Caco-2 (cell line): ENCODE measurements at regions of chr11 and their contacts with region 1.

Region 1: DNA sequence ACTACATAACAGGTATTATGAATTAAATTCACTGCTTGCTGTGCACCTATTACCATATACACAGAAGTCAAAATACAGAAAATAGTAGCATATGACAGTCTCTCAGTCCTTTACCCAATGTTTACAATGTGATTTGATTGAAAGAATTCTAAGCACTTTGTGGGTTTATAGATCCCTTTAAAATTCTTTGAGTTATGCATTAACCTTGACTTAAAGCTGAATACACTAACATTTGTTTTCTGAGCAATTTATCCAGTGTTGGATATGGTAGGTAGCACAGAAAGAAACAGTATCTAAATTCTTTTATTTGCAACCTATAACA is 230.8 kb upstream of the DDI1 start:
- DNase-seq: peak in 1 of 2 experiments; percentile 33
- H3K4me3 ChIP-seq: no peak overlapping the region
- H3K4me3 Mint-ChIP-seq: peak overlapping the region; percentile 39
- H3K27ac Mint-ChIP-seq: peak overlapping the region; percentile 68
- H3K4me1 ChIP-seq: peaks cover 49% of the 10 kb centered on the region
- H3K4me1 Mint-ChIP-seq: peaks cover 20% of the 10 kb centered on the region
- H3K27me3 ChIP-seq: no peaks in the 10 kb centered on the region
- H3K27me3 Mint-ChIP-seq: no peaks in the 10 kb centered on the region
- CTCF ChIP-seq: no peak

Region 2: DNA sequence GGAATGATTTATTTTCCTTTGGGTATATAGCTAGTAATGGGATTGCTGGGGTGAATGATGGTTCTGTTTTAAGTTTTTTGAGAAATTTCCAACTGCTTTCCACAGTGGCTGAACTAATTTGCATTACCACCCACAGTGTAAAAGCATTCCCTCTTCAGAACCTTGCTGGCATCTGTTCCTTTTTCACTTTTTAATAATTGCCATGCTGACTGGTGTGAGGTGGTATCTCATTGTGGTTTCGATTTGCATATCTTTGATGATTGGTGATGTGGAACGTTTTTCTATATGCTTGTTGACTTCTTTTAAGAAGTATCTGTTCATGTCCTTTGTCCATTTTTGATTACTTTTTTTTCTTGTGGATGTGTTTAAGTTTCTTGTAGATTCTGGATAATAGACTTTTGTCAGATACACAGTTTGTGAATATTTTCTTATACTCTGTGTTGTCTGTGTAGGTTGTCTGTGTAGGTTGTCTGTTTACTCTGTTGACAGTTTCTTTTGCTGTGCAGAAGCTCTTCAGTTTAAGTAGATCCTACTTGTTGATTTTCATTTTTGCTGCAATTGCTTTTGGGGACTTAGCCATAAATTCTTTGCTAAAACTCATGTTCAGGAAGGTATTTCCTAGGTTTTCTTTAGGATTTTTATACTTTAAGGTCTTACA is 61.0 kb before region 1 on chr11:
- CTCF ChIA-PET with region 1: no interaction called
- POLR2A ChIA-PET with region 1: no interaction called
- intact Hi-C with region 1: no loop called
- DNase-seq: no peak
- H3K4me3 ChIP-seq: no peak overlapping the region
- H3K4me3 Mint-ChIP-seq: no peak overlapping the region
- H3K27ac Mint-ChIP-seq: no peak overlapping the region
- H3K4me1 ChIP-seq: no peaks in the 10 kb centered on the region
- H3K4me1 Mint-ChIP-seq: no peaks in the 10 kb centered on the region
- H3K27me3 ChIP-seq: no peaks in the 10 kb centered on the region
- H3K27me3 Mint-ChIP-seq: no peaks in the 10 kb centered on the region
- CTCF ChIP-seq: no peak

Region 3: GRCh38 chr11:103794262-103794661 is 11.4 kb before region 1 on chr11:
- CTCF ChIA-PET with region 1: no interaction called
- POLR2A ChIA-PET with region 1: no interaction called
- intact Hi-C with region 1: no loop called
- DNase-seq: no peak
- H3K4me3 ChIP-seq: no peak overlapping the region
- H3K4me3 Mint-ChIP-seq: no peak overlapping the region
- H3K27ac Mint-ChIP-seq: no peak overlapping the region
- H3K4me1 ChIP-seq: no peaks in the 10 kb centered on the region
- H3K4me1 Mint-ChIP-seq: no peaks in the 10 kb centered on the region
- H3K27me3 ChIP-seq: no peaks in the 10 kb centered on the region
- H3K27me3 Mint-ChIP-seq: no peaks in the 10 kb centered on the region
- CTCF ChIP-seq: no peak

Region 4: GRCh38 chr11:103844327-103845215 is 38.9 kb after region 1 on chr11:
- CTCF ChIA-PET with region 1: no interaction called
- POLR2A ChIA-PET with region 1: no interaction called
- intact Hi-C with region 1: loop called (anchors 2 kb)
- DNase-seq: no peak
- H3K4me3 ChIP-seq: no peak overlapping the region
- H3K4me3 Mint-ChIP-seq: no peak overlapping the region
- H3K27ac Mint-ChIP-seq: no peak overlapping the region
- H3K4me1 ChIP-seq: peaks cover 23% of the 10 kb centered on the region; the same call in 1 of the 2 replicates
- H3K4me1 Mint-ChIP-seq: peaks cover 12% of the 10 kb centered on the region
- H3K27me3 ChIP-seq: no peaks in the 10 kb centered on the region
- H3K27me3 Mint-ChIP-seq: no peaks in the 10 kb centered on the region
- CTCF ChIP-seq: no peak

Region 5: DNA sequence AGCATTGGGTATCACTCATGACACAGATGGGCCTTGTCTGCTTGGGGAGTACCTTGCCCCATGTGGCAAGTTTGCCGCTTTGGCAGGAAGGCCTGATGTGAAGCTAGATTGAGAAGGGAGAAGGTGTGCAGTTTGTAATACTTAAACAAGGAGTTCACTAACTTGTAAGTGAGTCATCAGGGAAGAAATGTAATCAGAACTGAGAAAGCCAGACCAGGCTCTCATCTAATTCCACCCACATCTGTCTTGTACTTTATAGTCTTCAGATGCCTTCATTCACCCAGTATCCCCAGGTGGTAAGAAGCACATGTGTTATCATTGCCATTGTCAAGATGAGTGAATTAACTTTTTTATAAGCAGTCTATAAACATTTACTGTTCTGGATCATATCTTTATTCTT is 114.8 kb after region 1 on chr11:
- CTCF ChIA-PET with region 1: no interaction called
- POLR2A ChIA-PET with region 1: no interaction called
- intact Hi-C with region 1: loop called (anchors 1 kb)
- DNase-seq: no peak
- H3K4me3 ChIP-seq: no peak overlapping the region
- H3K4me3 Mint-ChIP-seq: no peak overlapping the region
- H3K27ac Mint-ChIP-seq: no peak overlapping the region
- H3K4me1 ChIP-seq: peaks cover 49% of the 10 kb centered on the region
- H3K4me1 Mint-ChIP-seq: peaks cover 33% of the 10 kb centered on the region
- H3K27me3 ChIP-seq: no peaks in the 10 kb centered on the region
- H3K27me3 Mint-ChIP-seq: peaks cover 4% of the 10 kb centered on the region
- CTCF ChIP-seq: no peak